ENCODE measurements at regions of chr16 and their contacts with region 1.

Region 1: GRCh38 chr16:58392215-58393137 is at the start of gene GINS3:
- DNase-seq: peak; percentile 77 to 84
- ATAC-seq: peak; percentile 95 to 96
- H3K4me3 ChIP-seq: peak within 1 kb of the TSS; percentile 86 to 98 (median 94)
- H3K27ac ChIP-seq: peak within 1 kb of the TSS; percentile 81 to 95 (median 86)
- H3K4me1 ChIP-seq: peaks cover 6 to 7% of the 10 kb centered on the region in 2 donors
- H3K27me3 ChIP-seq: no peaks in the 10 kb centered on the region
- CTCF ChIP-seq: peak in 1 of 5 experiments; percentile 9
- POLR2A ChIP-seq: no peak
- total RNA-seq, gene GINS3: 0.55 to 3.3 (median 1.0) TPM

Region 2: DNA sequence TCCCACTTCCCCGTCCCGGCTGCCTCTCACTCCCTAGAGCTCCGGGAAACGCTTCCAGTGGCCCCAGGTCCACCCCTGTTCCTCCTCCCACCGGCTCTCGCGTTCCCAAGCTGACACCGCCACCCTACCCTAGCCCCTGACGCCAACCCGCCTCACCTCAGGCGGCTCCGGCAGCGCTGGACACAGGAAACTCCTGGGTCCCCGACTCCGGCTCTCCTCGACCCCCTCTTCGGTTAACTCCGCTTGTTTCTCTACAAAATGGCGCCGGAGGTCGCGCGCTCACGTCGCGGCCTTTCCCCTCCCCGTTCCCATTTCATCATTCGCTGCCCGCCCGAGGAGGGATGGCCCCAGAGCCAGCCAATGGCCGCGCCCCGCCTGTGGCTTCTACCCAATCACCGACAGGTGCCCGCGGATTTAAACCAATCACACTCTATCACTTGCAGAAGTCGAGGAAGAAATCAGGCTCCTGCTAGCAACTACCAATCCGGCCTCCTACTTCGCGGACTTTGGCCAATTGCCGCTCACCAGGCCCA is 237.2 kb after region 1 on chr16 and contains the start of gene CNOT1:
- in situ Hi-C with region 1: no loop called
- intact Hi-C with region 1: loop called (anchors 1 kb)
- DNase-seq: peak; percentile 99 to 100
- ATAC-seq: peak; percentile 92 to 96
- H3K4me3 ChIP-seq: peak within 1 kb of the TSS; percentile 85 to 92 (median 88)
- H3K27ac ChIP-seq: peak within 1 kb of the TSS; percentile 94 to 99 (median 96)
- H3K4me1 ChIP-seq: peaks cover 21 to 35% of the 10 kb centered on the region in 2 donors
- H3K27me3 ChIP-seq: no peaks in the 10 kb centered on the region
- CTCF ChIP-seq: peak in 1 of 5 experiments; percentile 15
- POLR2A ChIP-seq: peak; percentile 87 to 89
- total RNA-seq, gene CNOT1: 54.7 to 119 (median 87.2) TPM